SK-MEL-5 (cell line): ENCODE measurements at regions of chr1 and their contacts with region 1.

Region 1: GRCh38 chr1:150649441-150650075 is 20.1 kb upstream of the ENSA start:
- DNase-seq: no peak

Region 2: GRCh38 chr1:150578965-150579798 is 70.4 kb before region 1 on chr1 and contains the start of gene MCL1:
- in situ Hi-C with region 1: loop called (anchors 10 kb)
- DNase-seq: peak; percentile 98
- total RNA-seq, gene MCL1: 123 and 130 TPM in 2 replicates